ENCODE measurements at regions of chr5 and their contacts with region 1.

Region 1: GRCh38 chr5:175796536-175797499 is 74.6 kb upstream of the CPLX2 start:
- DNase-seq: peak; percentile 31
- ATAC-seq: peak; percentile 73
- H3K4me3 Mint-ChIP-seq: no peak overlapping the region
- H3K27ac Mint-ChIP-seq: no peak overlapping the region
- H3K4me1 Mint-ChIP-seq: peaks cover 8% of the 10 kb centered on the region
- H3K27me3 Mint-ChIP-seq: peaks cover 64% of the 10 kb centered on the region
- CTCF ChIP-seq: no peak

Region 2: GRCh38 chr5:175729829-175730277 is 67.0 kb before region 1 on chr5:
- CTCF ChIA-PET with region 1: no interaction called
- POLR2A ChIA-PET with region 1: no interaction called
- intact Hi-C with region 1: no loop called
- DNase-seq: peak; percentile 74
- ATAC-seq: peak; percentile 71
- H3K4me3 Mint-ChIP-seq: no peak overlapping the region
- H3K27ac Mint-ChIP-seq: no peak overlapping the region
- H3K4me1 Mint-ChIP-seq: peaks cover 5% of the 10 kb centered on the region
- H3K27me3 Mint-ChIP-seq: peaks cover 46% of the 10 kb centered on the region
- CTCF ChIP-seq: no peak

Region 3: DNA sequence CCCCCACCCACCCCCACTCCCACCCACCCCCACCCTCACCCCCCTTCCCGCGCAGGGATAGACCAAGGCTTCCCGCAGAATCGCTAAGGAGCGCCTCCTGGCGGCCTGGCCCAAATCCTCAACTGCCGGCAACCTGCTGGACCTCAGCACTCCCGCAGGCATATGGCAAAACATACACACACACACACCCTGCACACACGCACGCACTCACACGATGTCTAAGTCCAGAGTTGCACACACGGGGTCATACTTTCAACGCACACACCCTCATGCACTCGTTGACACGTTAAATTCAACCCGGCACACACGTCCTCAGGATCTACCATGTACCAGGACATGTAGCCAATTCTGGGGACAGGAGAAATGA is 76.3 kb after region 1 on chr5:
- CTCF ChIA-PET with region 1: no interaction called
- POLR2A ChIA-PET with region 1: no interaction called
- intact Hi-C with region 1: loop called (anchors 5 kb)
- DNase-seq: no peak
- ATAC-seq: no peak
- H3K4me3 Mint-ChIP-seq: no peak overlapping the region
- H3K27ac Mint-ChIP-seq: no peak overlapping the region
- H3K4me1 Mint-ChIP-seq: peaks cover 7% of the 10 kb centered on the region
- H3K27me3 Mint-ChIP-seq: peaks cover 67% of the 10 kb centered on the region
- CTCF ChIP-seq: no peak